SK-MEL-5 (cell line): ENCODE measurements at regions of chr1 and their contacts with region 1.

Region 1: GRCh38 chr1:205485338-205486228 is 18.9 kb upstream of the CDK18 start:
- DNase-seq: peak; percentile 81

Region 2: DNA sequence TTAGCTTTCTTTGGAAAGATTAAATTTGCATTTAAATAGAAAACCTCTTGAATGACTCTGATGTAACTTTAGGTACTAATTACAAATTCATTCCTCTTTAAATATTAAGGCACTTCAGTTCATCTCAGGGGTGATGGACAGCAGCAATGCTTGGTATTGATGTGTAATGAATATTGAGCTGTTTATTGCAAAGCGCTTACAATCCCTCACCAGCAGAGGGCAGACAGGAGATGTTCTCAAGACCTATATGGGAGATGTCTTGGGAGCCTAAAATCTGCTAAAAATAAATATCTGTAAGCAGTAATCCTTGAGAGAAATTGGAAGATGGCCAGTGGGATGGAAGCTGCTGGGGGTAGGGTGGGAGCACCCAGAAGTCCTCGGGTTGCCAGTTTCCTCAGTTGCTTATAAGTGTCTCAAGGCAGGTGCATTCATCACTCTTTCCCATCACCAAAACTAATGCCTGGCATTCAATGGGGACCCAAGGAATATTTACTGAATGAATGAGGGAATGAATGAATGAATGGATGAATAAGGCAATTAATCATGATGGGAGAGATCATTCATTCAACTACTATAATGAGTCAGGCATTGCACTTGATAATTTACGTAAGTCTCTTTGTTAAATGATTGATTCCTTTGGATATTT is 131.2 kb before region 1 on chr1:
- in situ Hi-C with region 1: loop called (anchors 25 kb)
- DNase-seq: peak; percentile 81